Activated naive CD4-positive, alpha-beta T cell treated with anti-CD3 and anti-CD28 coated beads, Interleukin-2, amount 10 ng/mL, durations not matched to agents 7 days and 5 days (primary cell): ENCODE measurements at regions of chr6 and their contacts with region 1.

Region 1: DNA sequence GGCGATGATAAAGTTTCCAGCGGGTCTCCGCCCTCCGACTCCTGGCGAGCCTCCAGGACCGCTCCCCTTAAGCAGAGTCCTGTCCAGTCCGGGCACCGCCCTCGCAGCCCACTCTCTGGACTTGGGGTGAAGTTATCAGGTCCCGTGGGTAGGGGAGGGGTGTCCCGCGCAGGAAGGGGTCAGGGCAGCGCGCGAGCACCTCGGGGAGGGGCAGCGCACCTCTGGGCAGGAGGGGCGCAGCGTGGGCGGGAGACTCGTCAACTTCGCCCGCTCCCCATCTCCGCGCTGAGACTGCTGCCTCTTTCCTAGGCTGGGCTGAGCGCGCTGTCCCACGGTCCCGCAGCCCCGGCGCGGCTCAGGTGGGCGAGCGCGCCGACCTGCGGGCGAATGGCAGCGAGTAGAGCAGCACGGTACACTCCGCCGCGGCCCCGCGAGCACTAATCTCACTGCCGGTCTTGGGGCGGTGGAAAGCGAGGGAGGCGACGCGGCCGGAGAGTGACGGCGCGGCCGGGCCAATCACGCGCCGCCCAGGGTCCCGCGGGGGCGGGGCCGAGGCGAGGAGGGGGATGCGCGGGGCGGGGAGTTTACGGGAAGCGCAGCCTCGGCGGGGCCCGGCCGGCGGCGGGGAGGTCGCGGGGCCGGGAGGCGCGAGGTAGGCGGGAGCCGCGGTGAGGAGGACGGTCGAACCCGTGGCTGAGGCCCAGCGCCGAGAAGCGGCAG is at the start of gene MAN1A1:
- DNase-seq: peak; percentile 91
- H3K4me3 Mint-ChIP-seq: peak within 1 kb of the TSS; percentile 69
- H3K27ac Mint-ChIP-seq: peak within 1 kb of the TSS; percentile 69
- H3K4me1 Mint-ChIP-seq: peaks cover 39% of the 10 kb centered on the region
- H3K27me3 Mint-ChIP-seq: no peaks in the 10 kb centered on the region

Region 2: DNA sequence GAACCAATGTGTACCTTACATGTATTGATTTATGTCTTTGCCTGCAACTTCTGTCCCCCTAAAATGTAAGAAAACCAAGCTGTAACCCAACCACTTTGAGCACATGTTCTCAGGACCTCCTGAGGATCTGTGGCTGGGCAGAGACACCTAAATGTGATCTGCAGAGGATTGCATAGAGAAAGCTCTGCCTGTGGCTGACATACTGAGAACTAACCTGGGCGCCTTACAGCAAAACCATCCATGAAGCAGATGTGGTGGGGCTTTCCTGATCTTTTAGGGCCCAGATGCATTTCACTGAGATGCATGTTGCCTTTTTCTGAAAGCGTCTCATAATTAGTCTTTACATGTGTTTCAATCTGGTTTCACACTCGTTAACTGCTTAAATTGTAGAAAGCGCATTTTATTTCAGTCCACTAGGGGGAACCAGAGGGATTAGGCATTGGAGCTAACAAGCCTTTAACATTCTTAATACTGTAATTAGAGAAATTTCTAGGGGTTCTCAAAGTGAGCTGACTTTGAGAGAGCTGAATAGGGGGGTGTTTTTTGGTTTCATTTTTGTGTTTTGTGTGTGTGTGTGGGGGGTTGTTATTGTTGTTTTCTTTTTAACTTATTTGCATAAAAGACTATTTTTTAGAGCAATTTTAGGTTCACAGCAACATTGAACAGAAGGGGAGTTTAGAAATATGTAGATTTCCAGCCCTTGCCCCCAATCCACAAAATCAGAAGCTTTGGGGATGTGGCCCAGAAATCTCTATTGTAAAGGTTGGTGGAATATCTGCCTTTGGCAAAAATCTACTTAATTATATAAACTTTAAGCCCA is 220.1 kb before region 1 on chr6:
- CTCF ChIA-PET with region 1: interaction called, 11 read pairs
- DNase-seq: no peak
- H3K4me3 Mint-ChIP-seq: no peak overlapping the region
- H3K27ac Mint-ChIP-seq: no peak overlapping the region
- H3K4me1 Mint-ChIP-seq: no peaks in the 10 kb centered on the region
- H3K27me3 Mint-ChIP-seq: peaks cover 18% of the 10 kb centered on the region

Region 3: GRCh38 chr6:119147101-119148053 is 202.1 kb before region 1 on chr6:
- CTCF ChIA-PET with region 1: interaction called, 25 read pairs
- DNase-seq: peak; percentile 35
- H3K4me3 Mint-ChIP-seq: no peak overlapping the region
- H3K27ac Mint-ChIP-seq: peak overlapping the region; percentile 60
- H3K4me1 Mint-ChIP-seq: peaks cover 37% of the 10 kb centered on the region
- H3K27me3 Mint-ChIP-seq: no peaks in the 10 kb centered on the region

Region 4: GRCh38 chr6:119333707-119334295 is 15.7 kb before region 1 on chr6:
- CTCF ChIA-PET with region 1: interaction called, 28 read pairs
- DNase-seq: no peak
- H3K4me3 Mint-ChIP-seq: no peak overlapping the region
- H3K27ac Mint-ChIP-seq: no peak overlapping the region
- H3K4me1 Mint-ChIP-seq: peaks cover 20% of the 10 kb centered on the region
- H3K27me3 Mint-ChIP-seq: no peaks in the 10 kb centered on the region

Region 5: DNA sequence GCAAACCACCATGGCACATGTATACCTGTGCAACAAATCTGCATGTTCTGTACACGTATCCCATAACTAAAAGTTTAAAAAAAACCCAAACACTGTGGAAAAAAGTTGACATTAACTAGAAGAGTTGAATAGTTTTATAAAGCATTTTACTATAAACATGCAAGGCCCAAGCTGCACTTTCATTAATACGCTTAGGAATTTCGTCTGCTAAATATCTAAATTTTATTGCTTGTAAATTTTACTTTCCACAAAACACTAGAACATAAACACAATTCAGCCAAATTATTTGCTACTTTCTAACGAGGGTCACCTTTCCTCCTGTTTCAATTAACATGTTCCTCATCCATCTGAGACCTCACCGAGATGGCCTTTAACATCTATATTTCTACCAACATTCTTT is 74.5 kb after region 1 on chr6:
- CTCF ChIA-PET with region 1: no interaction called
- DNase-seq: no peak
- H3K4me3 Mint-ChIP-seq: no peak overlapping the region
- H3K27ac Mint-ChIP-seq: no peak overlapping the region
- H3K4me1 Mint-ChIP-seq: no peaks in the 10 kb centered on the region
- H3K27me3 Mint-ChIP-seq: no peaks in the 10 kb centered on the region